Prostate gland (tissue), 2 donors: ENCODE measurements at regions of chr7 and their contacts with region 1.

Region 1: DNA sequence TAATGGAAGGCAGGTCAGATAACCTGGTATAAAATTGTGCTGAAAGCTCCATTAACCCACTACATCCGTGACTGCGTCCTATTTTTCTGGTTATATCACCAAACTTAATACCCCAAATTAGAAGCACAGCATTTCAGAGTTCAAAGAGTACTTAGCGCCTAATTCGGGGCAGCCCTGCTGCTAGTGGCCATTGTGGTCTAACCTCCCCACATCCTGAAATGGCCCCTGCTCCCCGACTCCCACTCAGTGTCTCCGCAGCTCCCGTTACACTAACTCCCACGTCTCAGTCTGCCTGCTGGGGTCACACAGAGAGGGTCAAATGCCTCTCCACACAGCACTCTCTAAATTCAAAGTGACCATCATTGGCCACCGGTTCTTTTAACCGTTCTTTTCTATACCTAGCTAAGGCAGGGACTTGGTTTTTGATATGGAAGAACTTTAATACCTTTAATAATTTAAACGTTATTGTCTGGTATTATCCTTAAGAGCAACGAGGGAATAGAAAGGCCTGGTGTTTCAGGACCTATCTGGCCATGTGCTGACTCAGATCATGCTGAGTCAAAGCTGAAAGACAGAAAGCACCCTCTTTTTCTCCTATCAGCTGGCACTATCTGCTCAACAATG is 117.1 kb downstream of the KMT2E start:
- DNase-seq: no peak
- H3K4me3 ChIP-seq: no peak overlapping the region
- H3K27ac ChIP-seq: no peak overlapping the region
- H3K4me1 ChIP-seq: no peaks in the 10 kb centered on the region
- H3K27me3 ChIP-seq: no peaks in the 10 kb centered on the region
- CTCF ChIP-seq: no peak
- POLR2A ChIP-seq: no peak

Region 2: GRCh38 chr7:104819146-104819880 is 311.8 kb before region 1 on chr7:
- intact Hi-C with region 1: no loop called
- DNase-seq: no peak
- H3K4me3 ChIP-seq: no peak overlapping the region
- H3K27ac ChIP-seq: no peak overlapping the region
- H3K4me1 ChIP-seq: no peaks in the 10 kb centered on the region
- H3K27me3 ChIP-seq: no peaks in the 10 kb centered on the region
- CTCF ChIP-seq: no peak
- POLR2A ChIP-seq: no peak

Region 3: GRCh38 chr7:105336009-105336408 is 204.9 kb after region 1 on chr7:
- intact Hi-C with region 1: loop called (anchors 10 kb)
- DNase-seq: no peak
- H3K4me3 ChIP-seq: no peak overlapping the region
- H3K27ac ChIP-seq: no peak overlapping the region
- H3K4me1 ChIP-seq: no peaks in the 10 kb centered on the region
- H3K27me3 ChIP-seq: no peaks in the 10 kb centered on the region
- CTCF ChIP-seq: peak in 3 of 4 experiments; percentile 38 to 50 (median 42)
- POLR2A ChIP-seq: no peak